Right cardiac atrium (tissue), 5 donors: ENCODE measurements at regions of chr3 and their contacts with region 1.

Region 1: GRCh38 chr3:4166540-4166939 is 136.6 kb upstream of the SETMAR start:
- DNase-seq: no peak
- ATAC-seq: no peak
- H3K4me3 ChIP-seq: no peak overlapping the region
- H3K27ac ChIP-seq: no peak overlapping the region
- H3K4me1 ChIP-seq: peaks cover 1% of the 10 kb centered on the region
- H3K27me3 ChIP-seq: no peaks in the 10 kb centered on the region

Region 2: GRCh38 chr3:3739330-3740060 is 427.0 kb before region 1 on chr3:
- intact Hi-C with region 1: loop called in 1 of 4 experiments (anchors 5 kb)
- DNase-seq: no peak
- ATAC-seq: no peak
- H3K4me3 ChIP-seq: no peak overlapping the region
- H3K27ac ChIP-seq: no peak overlapping the region
- H3K4me1 ChIP-seq: no peaks in the 10 kb centered on the region
- H3K27me3 ChIP-seq: no peaks in the 10 kb centered on the region